Heart right ventricle (tissue), 16 donors: ENCODE measurements at regions of chr7 and their contacts with region 1.

Region 1: GRCh38 chr7:55309040-55309991 is 55.8 kb upstream of the LANCL2 start:
- DNase-seq: peak in 1 of 2 donors; percentile 16
- ATAC-seq: peak in 1 of 8 donors; percentile 28
- H3K4me3 ChIP-seq: no peak overlapping the region
- H3K27ac ChIP-seq: peak overlapping the region in 1 of 10 donors; percentile 44
- H3K4me1 ChIP-seq: peaks cover 0 to 36% (median 16%) of the 10 kb centered on the region in 9 donors
- H3K27me3 ChIP-seq: no peaks in the 10 kb centered on the region
- CTCF ChIP-seq: no peak

Region 2: GRCh38 chr7:55339033-55340000 is 30.0 kb after region 1 on chr7:
- intact Hi-C with region 1: no loop called
- DNase-seq: no peak
- ATAC-seq: no peak
- H3K4me3 ChIP-seq: no peak overlapping the region
- H3K27ac ChIP-seq: no peak overlapping the region
- H3K4me1 ChIP-seq: no peaks in the 10 kb centered on the region
- H3K27me3 ChIP-seq: peaks cover 0 to 9% (median 2%) of the 10 kb centered on the region in 7 donors
- CTCF ChIP-seq: no peak

Region 3: DNA sequence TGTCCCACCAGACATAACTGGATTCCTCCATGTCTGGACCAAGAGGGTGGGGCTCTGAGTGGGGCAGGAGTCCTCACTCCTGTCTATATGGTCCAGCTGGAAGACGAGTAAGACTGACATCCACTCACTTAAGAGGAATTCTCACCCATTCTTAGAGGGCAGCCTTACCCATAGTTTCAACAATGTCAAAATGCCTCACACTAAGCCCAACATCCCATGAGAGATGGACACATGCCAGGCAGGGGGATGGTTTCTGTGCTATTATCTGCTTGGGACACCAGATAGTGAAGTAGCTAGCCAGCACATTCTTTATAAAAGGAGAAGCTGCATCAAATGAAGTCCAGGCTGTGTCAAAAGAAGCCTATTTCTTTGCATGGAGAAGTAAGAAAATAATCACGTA is 51.2 kb after region 1 on chr7:
- intact Hi-C with region 1: loop called in 2 of 10 experiments (anchors 1 to 10 kb)
- DNase-seq: no peak
- ATAC-seq: no peak
- H3K4me3 ChIP-seq: no peak overlapping the region
- H3K27ac ChIP-seq: no peak overlapping the region
- H3K4me1 ChIP-seq: peaks cover 0 to 12% (median 8%) of the 10 kb centered on the region in 9 donors
- H3K27me3 ChIP-seq: peaks cover 0 to 8% (median 0%) of the 10 kb centered on the region in 7 donors
- CTCF ChIP-seq: no peak

Region 4: DNA sequence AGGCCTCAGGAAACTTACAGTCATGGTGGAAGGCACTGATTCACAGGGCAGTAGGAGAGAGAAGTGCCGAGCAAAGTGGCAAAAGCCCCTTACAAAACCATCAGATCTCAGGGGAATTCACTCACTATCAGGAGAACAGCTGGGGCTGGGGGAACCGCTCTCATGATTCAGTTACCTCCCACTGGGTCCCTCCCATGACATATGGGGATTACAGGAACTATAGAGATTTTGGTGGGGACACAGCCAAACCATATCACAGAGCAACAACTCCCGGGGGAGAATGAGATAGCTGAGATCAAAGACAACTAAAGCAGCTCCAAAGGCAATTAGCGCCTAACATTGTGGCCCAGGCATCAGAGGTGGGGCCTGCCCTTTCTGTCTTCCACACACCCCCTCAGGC is 348.3 kb after region 1 on chr7:
- intact Hi-C with region 1: no loop called
- DNase-seq: no peak
- ATAC-seq: no peak
- H3K4me3 ChIP-seq: no peak overlapping the region
- H3K27ac ChIP-seq: no peak overlapping the region
- H3K4me1 ChIP-seq: no peaks in the 10 kb centered on the region
- H3K27me3 ChIP-seq: no peaks in the 10 kb centered on the region
- CTCF ChIP-seq: no peak

Region 5: DNA sequence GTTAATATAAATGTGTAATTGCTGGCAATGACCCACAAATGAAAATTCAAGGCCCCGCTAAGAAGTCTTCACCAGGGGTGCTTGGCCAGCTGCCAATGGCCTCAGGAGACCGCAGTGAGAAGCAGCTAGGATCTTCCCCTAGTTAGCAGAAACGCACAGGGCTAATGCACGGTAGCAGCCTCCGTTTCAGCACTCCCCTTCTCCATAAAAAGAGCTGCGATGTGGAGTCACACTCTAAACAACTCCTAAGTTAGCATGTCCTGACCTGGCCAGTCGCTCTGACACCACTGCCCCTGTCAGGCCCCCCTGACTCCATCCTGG is 414.3 kb after region 1 on chr7:
- intact Hi-C with region 1: no loop called
- DNase-seq: no peak
- ATAC-seq: no peak
- H3K4me3 ChIP-seq: no peak overlapping the region
- H3K27ac ChIP-seq: no peak overlapping the region
- H3K4me1 ChIP-seq: no peaks in the 10 kb centered on the region
- H3K27me3 ChIP-seq: no peaks in the 10 kb centered on the region
- CTCF ChIP-seq: no peak

Region 6: DNA sequence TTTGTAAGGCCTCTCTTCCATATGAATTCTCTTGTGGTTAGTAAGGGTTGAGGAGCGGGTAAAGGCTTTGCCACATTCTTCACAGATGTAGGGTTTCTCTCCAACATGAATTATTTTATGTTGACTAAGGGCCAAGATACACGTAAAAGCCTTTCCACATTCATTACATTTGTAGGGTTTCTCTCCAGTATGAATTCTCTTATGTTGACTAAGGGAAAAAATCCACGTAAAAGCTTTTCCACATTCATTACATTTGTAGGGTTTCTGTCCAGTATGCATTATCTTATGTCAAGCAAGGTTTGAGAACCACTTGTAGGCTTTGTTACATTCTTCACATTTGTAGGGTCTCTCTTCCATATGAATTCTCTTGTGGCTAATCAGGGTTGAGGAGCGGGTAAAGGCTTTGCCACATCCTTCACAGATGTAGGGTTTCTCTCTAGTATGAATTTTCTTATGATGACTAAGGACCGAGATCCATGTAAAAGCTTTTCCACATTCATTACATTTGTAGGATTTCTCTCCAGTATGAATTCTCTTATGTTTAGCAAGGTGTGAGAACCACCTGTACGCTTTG is 1329.9 kb after region 1 on chr7:
- intact Hi-C with region 1: no loop called
- DNase-seq: no peak
- ATAC-seq: no peak
- H3K4me3 ChIP-seq: no peak overlapping the region
- H3K27ac ChIP-seq: no peak overlapping the region
- H3K4me1 ChIP-seq: no peaks in the 10 kb centered on the region
- H3K27me3 ChIP-seq: no peaks in the 10 kb centered on the region
- CTCF ChIP-seq: no peak